Activated naive CD4-positive, alpha-beta T cell treated with anti-CD3 and anti-CD28 coated beads, Interleukin-2, amount 10 ng/mL, durations not matched to agents 7 days and 5 days (primary cell): ENCODE measurements at regions of chr2 and their contacts with region 1.

Region 1: GRCh38 chr2:222690564-222691200 is 19.2 kb downstream of the MOGAT1 start:
- DNase-seq: peak; percentile 83
- H3K4me3 Mint-ChIP-seq: no peak overlapping the region
- H3K27ac Mint-ChIP-seq: no peak overlapping the region
- H3K4me1 Mint-ChIP-seq: peaks cover 10% of the 10 kb centered on the region
- H3K27me3 Mint-ChIP-seq: peaks cover 8% of the 10 kb centered on the region

Region 2: GRCh38 chr2:222903234-222904220 is 212.8 kb after region 1 on chr2:
- CTCF ChIA-PET with region 1: interaction called, 10 read pairs
- DNase-seq: peak; percentile 50
- H3K4me3 Mint-ChIP-seq: no peak overlapping the region
- H3K27ac Mint-ChIP-seq: no peak overlapping the region
- H3K4me1 Mint-ChIP-seq: peaks cover 10% of the 10 kb centered on the region
- H3K27me3 Mint-ChIP-seq: no peaks in the 10 kb centered on the region

Region 3: GRCh38 chr2:222939208-222939856 is 248.7 kb after region 1 on chr2:
- CTCF ChIA-PET with region 1: interaction called, 13 read pairs
- DNase-seq: peak; percentile 80
- H3K4me3 Mint-ChIP-seq: no peak overlapping the region
- H3K27ac Mint-ChIP-seq: no peak overlapping the region
- H3K4me1 Mint-ChIP-seq: no peaks in the 10 kb centered on the region
- H3K27me3 Mint-ChIP-seq: no peaks in the 10 kb centered on the region